MCF 10A (cell line): ENCODE measurements at regions of chr12 and their contacts with region 1.

Region 1: DNA sequence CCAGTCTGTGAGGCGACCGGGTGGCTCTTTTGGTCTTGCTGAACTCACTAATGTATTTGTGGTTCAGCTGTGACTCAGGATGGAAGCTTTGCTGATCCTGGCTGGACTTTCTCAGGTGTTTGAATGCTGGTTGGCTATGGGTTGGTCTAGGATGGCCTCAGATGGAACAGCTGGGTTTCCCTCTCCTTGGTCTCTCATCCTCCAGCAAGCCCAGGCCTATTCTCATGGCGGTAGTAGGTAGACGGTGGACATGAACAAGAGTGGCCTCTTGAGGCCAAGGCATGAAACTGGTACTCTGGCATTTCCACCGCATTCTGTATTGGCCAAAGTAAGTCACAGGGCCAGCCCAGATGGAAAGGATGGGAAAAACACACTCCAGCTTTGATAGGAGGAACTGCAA is 11.8 kb upstream of the POLR3B start:
- DNase-seq: peak; percentile 85
- H3K4me3 Mint-ChIP-seq: peak overlapping the region; percentile 44
- H3K27ac Mint-ChIP-seq: peak overlapping the region; percentile 83
- H3K4me1 Mint-ChIP-seq: peaks cover 22% of the 10 kb centered on the region
- H3K27me3 Mint-ChIP-seq: no peaks in the 10 kb centered on the region
- CTCF ChIP-seq: peak; percentile 60

Region 2: DNA sequence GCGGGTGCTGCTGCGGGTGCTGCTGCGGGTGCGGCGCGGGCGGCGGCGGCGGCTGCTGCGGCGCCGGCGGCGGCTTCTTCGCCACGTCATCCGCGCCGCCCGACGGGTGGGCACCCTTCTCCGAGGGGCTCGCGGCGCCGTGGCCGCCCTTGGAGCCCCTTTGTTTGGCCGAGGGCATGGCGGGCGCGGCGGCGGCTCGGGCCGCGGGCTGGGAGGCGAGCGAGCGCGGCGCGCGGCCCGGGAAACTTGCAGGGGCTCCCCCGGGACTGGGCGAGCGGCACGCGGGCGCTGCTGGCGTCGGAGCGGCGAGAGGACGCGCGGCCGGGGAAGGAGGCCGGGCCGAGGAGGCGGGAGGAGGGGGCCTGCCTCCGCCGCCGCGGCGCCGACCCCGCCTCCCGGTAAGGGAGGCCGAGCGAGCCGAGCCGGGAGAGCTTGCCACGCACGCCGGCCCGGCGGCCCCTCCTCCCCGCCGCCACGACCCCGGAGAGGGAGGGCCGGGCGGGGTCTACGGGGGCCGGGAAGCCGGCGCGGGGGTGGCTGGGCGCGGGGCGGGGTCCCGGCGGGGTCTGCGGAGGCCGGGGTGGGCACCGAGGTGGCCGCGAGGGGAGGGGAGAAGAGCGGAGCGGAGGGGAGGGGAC is 97.9 kb before region 1 on chr12 and contains the start of gene CKAP4:
- CTCF ChIA-PET with region 1: interaction called, 7 read pairs
- POLR2A ChIA-PET with region 1: interaction called, 6 read pairs
- intact Hi-C with region 1: loop called (anchors 5 kb)
- DNase-seq: peak; percentile 72
- H3K4me3 Mint-ChIP-seq: peak within 1 kb of the TSS; percentile 76
- H3K27ac Mint-ChIP-seq: peak within 1 kb of the TSS; percentile 23
- H3K4me1 Mint-ChIP-seq: peaks cover 23% of the 10 kb centered on the region
- H3K27me3 Mint-ChIP-seq: no peaks in the 10 kb centered on the region
- CTCF ChIP-seq: no peak
- total RNA-seq, gene CKAP4: 101 and 118 TPM in 2 replicates

Region 3: DNA sequence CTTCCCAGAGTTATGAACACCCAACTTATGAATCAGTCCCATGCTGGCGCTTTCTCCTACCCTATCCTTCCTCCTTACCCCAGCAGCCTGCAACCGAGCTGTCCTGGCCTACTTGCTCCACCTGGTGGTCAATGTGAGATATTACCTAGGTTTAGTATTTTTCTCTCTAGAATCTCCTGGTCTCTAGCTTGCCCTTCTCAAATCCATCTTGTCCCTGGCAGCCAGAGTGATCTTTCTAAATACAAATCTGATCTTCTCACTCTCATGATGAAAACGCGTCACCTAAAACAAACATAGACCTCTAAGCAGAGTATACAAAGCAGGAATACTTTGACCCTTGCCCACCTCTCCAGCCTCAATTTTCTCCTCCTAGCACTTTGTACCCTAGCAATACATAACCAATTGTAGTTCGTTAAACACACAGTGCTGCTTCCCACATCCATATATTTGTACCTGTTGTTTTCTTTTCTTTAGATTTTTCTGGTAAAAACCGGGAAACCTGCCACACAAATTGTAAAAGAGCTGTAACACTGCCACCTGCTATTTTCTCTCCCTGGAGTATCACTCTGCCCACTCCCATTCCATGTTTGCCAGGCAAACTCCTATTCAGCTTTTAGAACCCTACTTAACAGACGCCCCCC is 63.2 kb before region 1 on chr12:
- CTCF ChIA-PET with region 1: interaction called, 22 read pairs
- POLR2A ChIA-PET with region 1: interaction called, 6 read pairs
- intact Hi-C with region 1: loop called (anchors 1 kb)
- DNase-seq: peak; percentile 83
- H3K4me3 Mint-ChIP-seq: no peak overlapping the region
- H3K27ac Mint-ChIP-seq: no peak overlapping the region
- H3K4me1 Mint-ChIP-seq: peaks cover 15% of the 10 kb centered on the region
- H3K27me3 Mint-ChIP-seq: no peaks in the 10 kb centered on the region
- CTCF ChIP-seq: peak; percentile 76

Region 4: DNA sequence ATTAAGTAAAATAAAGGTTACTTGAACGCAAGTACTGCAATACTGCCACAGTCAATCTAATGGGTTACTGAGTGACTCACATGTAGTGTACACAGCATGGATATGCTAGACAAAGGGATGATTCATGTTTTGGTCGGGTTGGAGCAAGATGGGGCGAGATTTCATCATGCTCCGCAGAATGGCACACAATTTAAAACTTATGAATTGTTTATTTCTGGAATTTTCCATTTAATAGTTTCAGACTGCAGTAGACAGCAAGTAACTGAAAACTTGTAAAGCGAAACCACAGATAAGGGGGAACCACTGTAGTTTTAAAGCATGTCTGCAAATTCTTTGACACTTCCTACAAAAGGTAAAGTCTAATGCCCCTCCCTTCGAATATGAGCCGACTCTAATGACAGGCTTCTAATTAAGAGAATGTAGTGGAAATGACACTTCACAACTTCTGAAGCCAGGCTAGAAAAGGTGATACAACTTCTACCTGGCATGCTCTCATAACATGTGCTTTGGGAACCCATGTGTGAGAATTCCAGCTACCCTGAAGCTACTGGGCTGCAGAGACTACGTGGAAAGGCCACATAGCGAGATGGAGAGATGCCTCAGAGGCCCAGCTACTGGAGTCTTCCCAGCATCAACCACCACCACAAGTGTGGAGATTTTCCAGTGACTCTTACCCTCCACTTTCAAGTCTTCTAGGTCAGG is 57.1 kb before region 1 on chr12:
- CTCF ChIA-PET with region 1: interaction called, 22 read pairs
- POLR2A ChIA-PET with region 1: interaction called, 3 read pairs
- intact Hi-C with region 1: loop called (anchors 1 kb)
- DNase-seq: peak; percentile 94
- H3K4me3 Mint-ChIP-seq: peak overlapping the region; percentile 21
- H3K27ac Mint-ChIP-seq: peak overlapping the region; percentile 95
- H3K4me1 Mint-ChIP-seq: peaks cover 22% of the 10 kb centered on the region
- H3K27me3 Mint-ChIP-seq: no peaks in the 10 kb centered on the region
- CTCF ChIP-seq: no peak

Region 5: DNA sequence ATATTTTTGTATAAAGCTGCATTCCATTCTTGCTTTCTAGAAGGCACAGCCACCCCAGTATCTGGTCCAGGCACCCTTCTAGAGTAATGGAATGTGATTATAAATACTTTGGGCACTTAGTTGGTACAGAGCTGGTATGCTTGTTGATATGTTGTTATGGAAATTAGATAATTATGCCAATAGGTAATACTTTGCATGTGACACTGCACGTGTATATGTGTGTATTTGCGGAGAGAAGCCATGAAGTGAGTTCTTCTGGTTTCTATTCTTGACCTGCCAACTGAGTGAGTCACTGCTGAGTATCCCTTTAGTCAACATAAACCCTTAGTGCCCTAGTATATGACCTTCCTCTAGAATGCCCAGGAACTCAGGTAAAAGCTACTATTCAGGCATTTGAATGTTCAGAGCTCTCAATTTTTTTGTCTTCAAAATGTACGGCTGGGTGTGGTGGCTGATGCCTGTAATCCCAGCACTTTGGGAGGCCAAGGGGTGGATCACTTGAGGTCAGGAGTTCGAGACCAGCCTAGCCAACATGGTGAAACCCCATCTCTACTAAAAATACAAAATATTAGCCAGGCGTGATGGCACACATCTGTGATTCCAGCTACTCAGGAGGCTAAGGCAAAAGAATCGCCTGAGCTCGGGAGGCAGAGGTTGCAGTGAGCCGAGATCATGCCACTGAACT is 49.4 kb before region 1 on chr12:
- CTCF ChIA-PET with region 1: interaction called, 17 read pairs
- POLR2A ChIA-PET with region 1: interaction called, 22 read pairs
- intact Hi-C with region 1: loop called (anchors 5 kb)
- DNase-seq: peak; percentile 80
- H3K4me3 Mint-ChIP-seq: no peak overlapping the region
- H3K27ac Mint-ChIP-seq: peak overlapping the region; percentile 57
- H3K4me1 Mint-ChIP-seq: peaks cover 12% of the 10 kb centered on the region
- H3K27me3 Mint-ChIP-seq: no peaks in the 10 kb centered on the region
- CTCF ChIP-seq: no peak

Region 6: DNA sequence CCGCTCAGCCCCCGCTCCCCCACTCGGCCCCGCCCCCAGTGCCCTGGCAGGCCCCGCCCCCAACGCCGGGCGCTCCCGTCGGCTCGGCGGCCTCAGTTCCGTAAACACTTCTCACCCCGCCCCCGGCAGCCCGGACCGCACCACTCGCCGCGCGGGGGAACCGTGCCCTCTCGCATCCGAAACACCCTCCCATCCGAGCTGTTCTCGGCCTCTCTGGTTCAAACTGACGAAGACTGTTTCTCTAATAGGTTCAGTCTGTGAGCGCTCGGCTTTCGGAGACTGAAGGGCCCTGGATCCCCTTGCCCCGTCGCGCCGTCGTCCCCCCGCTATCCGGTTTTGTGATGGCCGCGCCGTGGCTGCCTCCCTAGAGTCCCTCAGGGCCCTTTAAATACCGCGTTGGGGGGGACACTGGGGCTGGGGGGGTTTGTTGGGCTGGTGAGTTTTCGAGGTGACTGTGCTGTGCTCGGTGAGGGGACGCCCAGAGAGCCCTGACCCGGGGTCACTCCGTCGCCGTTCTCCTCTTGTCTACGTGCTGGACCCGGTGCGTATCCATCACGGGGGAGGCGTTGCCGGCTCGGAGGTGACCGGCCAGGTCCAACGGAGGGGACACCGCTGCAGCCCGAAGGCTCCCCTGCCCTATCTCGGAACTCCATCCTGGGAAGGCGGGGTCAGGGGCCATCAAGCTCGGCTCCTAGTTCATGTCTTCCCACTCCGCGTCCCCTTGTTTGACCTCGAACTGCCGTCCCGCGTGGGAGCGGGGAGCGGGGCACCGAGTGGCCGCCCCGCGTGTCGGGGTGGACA is 43.1 kb before region 1 on chr12 and contains the start of gene TCP11L2:
- CTCF ChIA-PET with region 1: interaction called, 17 read pairs
- POLR2A ChIA-PET with region 1: interaction called, 22 read pairs
- intact Hi-C with region 1: loop called (anchors 5 kb)
- DNase-seq: peak; percentile 79
- H3K4me3 Mint-ChIP-seq: peak within 1 kb of the TSS; percentile 89
- H3K27ac Mint-ChIP-seq: peak within 1 kb of the TSS; percentile 100
- H3K4me1 Mint-ChIP-seq: peaks cover 23% of the 10 kb centered on the region
- H3K27me3 Mint-ChIP-seq: no peaks in the 10 kb centered on the region
- CTCF ChIP-seq: no peak
- total RNA-seq, gene TCP11L2: 10.2 and 11.4 TPM in 2 replicates

Region 7: GRCh38 chr12:106317406-106318082 is 28.2 kb before region 1 on chr12:
- CTCF ChIA-PET with region 1: interaction called, 13 read pairs
- POLR2A ChIA-PET with region 1: interaction called, 5 read pairs
- intact Hi-C with region 1: no loop called
- DNase-seq: peak; percentile 90
- H3K4me3 Mint-ChIP-seq: no peak overlapping the region
- H3K27ac Mint-ChIP-seq: peak overlapping the region; percentile 21
- H3K4me1 Mint-ChIP-seq: peaks cover 13% of the 10 kb centered on the region
- H3K27me3 Mint-ChIP-seq: no peaks in the 10 kb centered on the region
- CTCF ChIP-seq: no peak

Region 8: DNA sequence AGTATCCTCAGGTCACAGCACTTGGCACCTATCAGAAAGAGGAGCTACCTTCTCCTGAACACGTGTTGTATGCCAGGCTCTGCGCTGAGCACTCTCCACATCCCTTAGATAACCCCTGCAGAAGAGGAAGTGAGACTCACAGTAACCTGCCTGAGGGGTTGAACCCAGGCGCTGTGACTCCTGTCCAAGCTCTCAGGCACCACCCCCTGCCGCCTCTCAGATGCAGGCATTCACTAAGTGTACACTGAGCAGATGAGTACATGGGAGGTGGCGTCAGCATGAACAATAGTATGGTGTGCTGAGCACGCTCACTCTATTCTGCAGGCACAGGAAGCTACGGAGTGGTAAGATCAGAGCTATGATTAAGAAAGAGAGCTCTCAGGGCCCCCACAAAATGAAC is 407.8 kb after region 1 on chr12:
- CTCF ChIA-PET with region 1: no interaction called
- POLR2A ChIA-PET with region 1: no interaction called
- intact Hi-C with region 1: no loop called
- DNase-seq: no peak
- H3K4me3 Mint-ChIP-seq: no peak overlapping the region
- H3K27ac Mint-ChIP-seq: no peak overlapping the region
- H3K4me1 Mint-ChIP-seq: no peaks in the 10 kb centered on the region
- H3K27me3 Mint-ChIP-seq: no peaks in the 10 kb centered on the region
- CTCF ChIP-seq: no peak